ENCODE measurements at regions of chr19 and their contacts with region 1.

Region 1: DNA sequence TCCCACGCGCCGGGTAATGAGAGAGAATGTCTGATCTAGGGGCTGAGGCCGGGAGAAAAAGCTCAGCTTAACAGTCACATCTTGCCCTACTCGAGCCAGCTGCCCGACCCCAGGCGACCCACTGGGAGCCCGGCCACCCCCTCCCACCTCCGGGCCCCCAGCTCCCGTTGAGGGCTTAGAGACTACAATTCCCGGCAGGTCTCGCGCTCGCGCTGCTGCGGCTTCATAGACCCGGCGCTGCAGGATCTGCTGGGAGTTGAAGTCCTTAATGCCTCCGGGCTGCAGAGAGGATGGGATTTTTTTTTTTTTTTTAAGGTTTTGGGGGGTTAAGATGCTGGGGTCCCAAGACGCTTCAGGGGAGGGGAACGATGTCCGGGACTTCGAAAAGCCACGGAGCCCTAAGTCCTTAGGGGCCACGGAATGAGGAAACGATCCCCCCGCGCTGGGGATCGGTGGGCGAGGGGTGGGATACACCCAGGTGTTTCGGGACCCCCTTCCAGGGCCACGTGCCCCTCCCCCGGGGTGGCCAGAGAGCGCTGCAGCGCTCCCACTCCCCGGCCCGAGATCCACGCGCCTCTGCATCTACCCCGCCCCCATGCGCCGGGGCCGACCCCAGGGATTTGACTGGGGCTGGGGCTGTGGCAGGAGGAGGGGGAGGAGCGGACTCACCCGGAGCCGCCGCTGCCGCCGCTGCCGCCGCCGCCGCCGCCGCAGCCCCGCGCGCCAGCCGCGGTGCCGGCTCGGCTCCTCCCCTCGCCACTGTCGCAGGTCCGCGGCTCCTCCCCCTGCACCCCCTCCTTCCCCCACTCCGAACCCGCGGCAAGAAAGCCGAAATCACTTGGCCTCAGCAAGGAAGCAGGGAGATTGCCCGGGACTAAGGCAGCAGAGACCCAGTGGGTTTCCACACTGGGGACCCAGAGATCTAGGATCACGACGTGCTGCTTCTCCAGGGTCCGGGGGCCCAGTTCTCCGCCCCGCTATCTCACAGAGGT is at the start of gene SYT3:
- DNase-seq: peak; percentile 61
- ATAC-seq: peak; percentile 84
- H3K4me3 ChIP-seq: peak within 1 kb of the TSS in 4 of 5 experiments; percentile 23 to 62 (median 50)
- H3K4me3 Mint-ChIP-seq: peak within 1 kb of the TSS; percentile 80
- H3K27ac ChIP-seq: no peak within 1 kb of the TSS
- H3K27ac Mint-ChIP-seq: no peak within 1 kb of the TSS
- H3K4me1 ChIP-seq: peaks cover 13 to 14% of the 10 kb centered on the region in 2 donors
- H3K4me1 Mint-ChIP-seq: peaks cover 13% of the 10 kb centered on the region
- H3K27me3 ChIP-seq: peaks cover 0 to 55% (median 25%) of the 10 kb centered on the region in 4 experiments
- H3K27me3 Mint-ChIP-seq: peaks cover 54% of the 10 kb centered on the region
- CTCF ChIP-seq: no peak
- total RNA-seq, gene SYT3: 0.17 and 0.39 TPM in 2 replicates

Region 2: GRCh38 chr19:50511068-50511822 is 128.2 kb before region 1 on chr19 and contains the start of gene JOSD2:
- CTCF ChIA-PET with region 1: no interaction called
- POLR2A ChIA-PET with region 1: no interaction called
- intact Hi-C with region 1: no loop called
- DNase-seq: peak; percentile 99
- ATAC-seq: peak; percentile 94
- H3K4me3 ChIP-seq: peak within 1 kb of the TSS; percentile 19 to 84 (median 62)
- H3K4me3 Mint-ChIP-seq: peak within 1 kb of the TSS; percentile 96
- H3K27ac ChIP-seq: peak within 1 kb of the TSS; percentile 87 to 98
- H3K27ac Mint-ChIP-seq: peak within 1 kb of the TSS; percentile 100
- H3K4me1 ChIP-seq: peaks cover 14 to 20% of the 10 kb centered on the region in 2 donors
- H3K4me1 Mint-ChIP-seq: peaks cover 17% of the 10 kb centered on the region
- H3K27me3 ChIP-seq: peaks cover 0 to 25% (median 2%) of the 10 kb centered on the region in 4 experiments
- H3K27me3 Mint-ChIP-seq: peaks cover 3% of the 10 kb centered on the region
- CTCF ChIP-seq: no peak
- total RNA-seq, gene JOSD2: 32.8 TPM in 2 replicates

Region 3: GRCh38 chr19:50679177-50680125 is 40.0 kb after region 1 on chr19:
- CTCF ChIA-PET with region 1: no interaction called
- POLR2A ChIA-PET with region 1: no interaction called
- intact Hi-C with region 1: loop called (anchors 1 kb)
- DNase-seq: peak; percentile 95
- ATAC-seq: peak; percentile 98
- H3K4me3 ChIP-seq: peak overlapping the region in 3 of 5 experiments; percentile 27 to 56 (median 31)
- H3K4me3 Mint-ChIP-seq: peak overlapping the region; percentile 80
- H3K27ac ChIP-seq: peak overlapping the region; percentile 78 to 81
- H3K27ac Mint-ChIP-seq: peak overlapping the region; percentile 90
- H3K4me1 ChIP-seq: peaks cover 12 to 13% of the 10 kb centered on the region in 2 donors
- H3K4me1 Mint-ChIP-seq: peaks cover 18% of the 10 kb centered on the region
- H3K27me3 ChIP-seq: peaks cover 0 to 4% (median 1%) of the 10 kb centered on the region in 4 experiments
- H3K27me3 Mint-ChIP-seq: peaks cover 15% of the 10 kb centered on the region
- CTCF ChIP-seq: peak; percentile 20

Region 4: GRCh38 chr19:50705422-50706019 is 66.1 kb after region 1 on chr19:
- CTCF ChIA-PET with region 1: no interaction called
- POLR2A ChIA-PET with region 1: no interaction called
- intact Hi-C with region 1: no loop called
- DNase-seq: peak; percentile 57
- ATAC-seq: peak; percentile 58
- H3K4me3 ChIP-seq: no peak overlapping the region
- H3K4me3 Mint-ChIP-seq: no peak overlapping the region
- H3K27ac ChIP-seq: no peak overlapping the region
- H3K27ac Mint-ChIP-seq: no peak overlapping the region
- H3K4me1 ChIP-seq: no peaks in the 10 kb centered on the region
- H3K4me1 Mint-ChIP-seq: no peaks in the 10 kb centered on the region
- H3K27me3 ChIP-seq: peaks cover 0 to 41% (median 5%) of the 10 kb centered on the region in 4 experiments
- H3K27me3 Mint-ChIP-seq: peaks cover 39% of the 10 kb centered on the region
- CTCF ChIP-seq: peak; percentile 51

Region 5: DNA sequence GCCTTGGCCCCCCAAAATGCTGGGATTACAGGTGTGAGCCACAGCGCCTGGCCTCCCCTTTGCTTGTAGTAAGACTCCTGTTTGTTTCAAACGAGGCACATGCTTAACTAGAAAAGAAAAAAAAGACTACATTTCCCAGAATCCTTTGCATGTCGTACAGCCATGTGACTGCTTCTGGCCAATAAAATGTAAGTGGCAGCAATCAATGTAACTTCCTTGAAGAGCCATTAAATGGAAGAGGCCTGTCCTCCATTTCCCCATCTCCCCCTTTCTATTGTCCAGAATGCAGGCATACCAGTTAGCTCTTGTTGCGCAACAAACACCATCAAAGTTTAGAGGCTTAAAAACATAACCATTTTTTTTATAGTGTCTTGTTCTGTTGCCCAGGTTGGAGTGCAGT is 120.5 kb after region 1 on chr19:
- CTCF ChIA-PET with region 1: no interaction called
- POLR2A ChIA-PET with region 1: no interaction called
- intact Hi-C with region 1: loop called (anchors 10 kb)
- DNase-seq: peak; percentile 24
- ATAC-seq: no peak
- H3K4me3 ChIP-seq: no peak overlapping the region
- H3K4me3 Mint-ChIP-seq: no peak overlapping the region
- H3K27ac ChIP-seq: no peak overlapping the region
- H3K27ac Mint-ChIP-seq: no peak overlapping the region
- H3K4me1 ChIP-seq: no peaks in the 10 kb centered on the region
- H3K4me1 Mint-ChIP-seq: no peaks in the 10 kb centered on the region
- H3K27me3 ChIP-seq: no peaks in the 10 kb centered on the region
- H3K27me3 Mint-ChIP-seq: peaks cover 17% of the 10 kb centered on the region
- CTCF ChIP-seq: no peak

Measured in B cell (primary cell).